ENCODE measurements at regions of chr2 and their contacts with region 1.

Region 1: GRCh38 chr2:60818272-60818671 is 62.2 kb downstream of the PAPOLG start:
- DNase-seq: no peak
- H3K4me3 Mint-ChIP-seq: peak overlapping the region; percentile 54
- H3K27ac Mint-ChIP-seq: peak overlapping the region; percentile 87
- H3K4me1 Mint-ChIP-seq: peaks cover 42% of the 10 kb centered on the region
- H3K27me3 Mint-ChIP-seq: no peaks in the 10 kb centered on the region

Region 2: GRCh38 chr2:60366135-60366712 is 452.0 kb before region 1 on chr2:
- intact Hi-C with region 1: no loop called
- DNase-seq: no peak
- H3K4me3 Mint-ChIP-seq: no peak overlapping the region
- H3K27ac Mint-ChIP-seq: no peak overlapping the region
- H3K4me1 Mint-ChIP-seq: no peaks in the 10 kb centered on the region
- H3K27me3 Mint-ChIP-seq: peaks cover 6% of the 10 kb centered on the region

Region 3: GRCh38 chr2:60756191-60757041 is 61.9 kb before region 1 on chr2 and contains the start of gene PAPOLG:
- intact Hi-C with region 1: loop called (anchors 5 kb)
- DNase-seq: peak; percentile 94
- H3K4me3 Mint-ChIP-seq: peak within 1 kb of the TSS; percentile 96
- H3K27ac Mint-ChIP-seq: peak within 1 kb of the TSS; percentile 96
- H3K4me1 Mint-ChIP-seq: peaks cover 29% of the 10 kb centered on the region
- H3K27me3 Mint-ChIP-seq: no peaks in the 10 kb centered on the region
- total RNA-seq, gene PAPOLG: 20.4 and 21.2 TPM in 2 replicates

Region 4: GRCh38 chr2:60834270-60834962 is 16.1 kb after region 1 on chr2:
- intact Hi-C with region 1: loop called (anchors 2 kb)
- DNase-seq: no peak
- H3K4me3 Mint-ChIP-seq: no peak overlapping the region
- H3K27ac Mint-ChIP-seq: peak overlapping the region; percentile 47
- H3K4me1 Mint-ChIP-seq: peaks cover 19% of the 10 kb centered on the region
- H3K27me3 Mint-ChIP-seq: no peaks in the 10 kb centered on the region

Region 5: DNA sequence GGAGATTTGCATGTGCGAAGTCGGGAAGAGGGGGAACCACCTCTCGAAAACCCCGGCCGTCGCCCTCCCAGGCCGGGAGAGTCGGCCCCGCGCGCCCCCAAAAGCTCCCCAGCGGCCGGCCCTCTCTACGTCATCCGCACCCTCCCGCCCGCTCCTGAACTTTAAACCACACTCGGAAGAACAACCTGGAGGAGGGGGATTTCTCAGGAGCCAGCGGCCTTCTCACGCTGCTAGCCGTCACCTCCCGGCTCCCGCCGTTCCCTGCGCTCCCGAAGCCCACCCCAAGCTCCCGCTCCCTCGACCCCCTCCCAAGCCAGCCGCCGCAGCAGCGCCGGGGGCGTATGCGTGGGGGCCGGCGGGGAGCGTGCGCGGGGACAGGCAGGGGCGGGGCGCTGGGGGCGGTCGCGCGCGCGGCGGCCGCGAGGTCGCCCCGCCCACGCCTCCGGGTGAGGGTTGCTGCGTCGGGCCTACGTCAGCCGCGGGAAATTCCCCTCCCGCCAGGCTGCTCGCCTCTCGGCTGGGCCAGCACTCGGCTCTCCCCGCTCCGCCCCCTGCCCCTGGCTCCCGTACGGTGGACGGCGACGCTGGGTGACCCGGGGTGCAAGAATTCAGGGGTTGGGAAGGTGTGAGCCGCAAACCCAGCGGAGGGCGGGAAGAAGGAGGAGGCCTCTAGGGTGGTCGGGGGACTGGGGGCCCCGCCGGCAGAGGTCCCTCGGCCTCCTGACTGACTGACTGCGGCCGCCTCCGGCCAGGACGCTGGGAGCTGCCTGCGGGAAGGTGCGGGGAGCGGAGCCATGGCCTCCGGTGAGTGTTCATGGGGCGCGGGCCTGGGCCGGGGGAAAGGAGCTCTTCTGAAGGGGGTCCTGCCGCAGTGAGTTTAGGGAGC is 63.0 kb after region 1 on chr2 and contains the start of gene REL:
- intact Hi-C with region 1: loop called (anchors 1 kb)
- DNase-seq: peak; percentile 87
- H3K4me3 Mint-ChIP-seq: peak within 1 kb of the TSS; percentile 99
- H3K27ac Mint-ChIP-seq: peak within 1 kb of the TSS; percentile 97
- H3K4me1 Mint-ChIP-seq: peaks cover 25% of the 10 kb centered on the region
- H3K27me3 Mint-ChIP-seq: no peaks in the 10 kb centered on the region
- total RNA-seq, gene REL: 118 and 123 TPM in 2 replicates

Region 6: GRCh38 chr2:60976875-60977561 is 158.7 kb after region 1 on chr2:
- intact Hi-C with region 1: loop called (anchors 1 kb)
- DNase-seq: no peak
- H3K4me3 Mint-ChIP-seq: no peak overlapping the region
- H3K27ac Mint-ChIP-seq: peak overlapping the region; percentile 23
- H3K4me1 Mint-ChIP-seq: peaks cover 28% of the 10 kb centered on the region
- H3K27me3 Mint-ChIP-seq: no peaks in the 10 kb centered on the region

Measured in activated T-helper 2 cell treated with anti-CD3 and anti-CD28 coated beads, Interferon-gamma antibody, Interleukin-2, Interleukin-4, amounts not matched to agents 10 μg/mL and 5 μg/mL and 100 μg/mL, durations not matched to agents 14 hours and 24 hours and 36 hours (primary cell).